ENCODE measurements at regions of chr1 and their contacts with region 1.

Region 1: DNA sequence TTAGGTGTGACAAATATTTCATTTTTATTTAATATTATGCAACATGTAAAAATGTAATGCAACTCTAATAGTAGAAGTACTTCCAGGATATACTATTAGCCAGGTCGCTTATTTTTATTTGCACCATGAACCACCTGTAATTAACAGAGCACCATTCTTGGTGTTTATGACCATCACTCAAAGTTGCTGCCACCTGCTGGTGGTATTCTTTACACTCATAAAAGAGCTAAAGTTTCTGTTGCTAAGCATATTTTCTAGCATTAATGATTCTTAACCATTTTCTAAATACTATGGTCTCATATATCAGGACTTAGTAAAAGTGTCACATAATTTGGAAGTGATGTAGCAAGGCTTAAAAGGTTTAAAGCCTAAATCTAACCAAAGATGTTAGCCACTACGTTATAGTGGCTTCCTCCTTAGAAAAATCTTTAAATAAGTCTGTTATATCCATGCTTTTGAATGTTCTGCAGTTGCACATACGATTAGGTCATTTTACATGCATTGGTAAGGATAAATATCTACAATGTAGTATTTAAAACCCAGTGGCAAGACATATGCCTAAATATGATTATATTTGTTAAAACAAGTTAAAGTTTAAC is 244.5 kb downstream of the NEGR1 start:
- H3K4me3 Mint-ChIP-seq: no peak overlapping the region
- H3K27ac Mint-ChIP-seq: no peak overlapping the region
- H3K4me1 Mint-ChIP-seq: no peaks in the 10 kb centered on the region
- H3K27me3 Mint-ChIP-seq: no peaks in the 10 kb centered on the region

Region 2: DNA sequence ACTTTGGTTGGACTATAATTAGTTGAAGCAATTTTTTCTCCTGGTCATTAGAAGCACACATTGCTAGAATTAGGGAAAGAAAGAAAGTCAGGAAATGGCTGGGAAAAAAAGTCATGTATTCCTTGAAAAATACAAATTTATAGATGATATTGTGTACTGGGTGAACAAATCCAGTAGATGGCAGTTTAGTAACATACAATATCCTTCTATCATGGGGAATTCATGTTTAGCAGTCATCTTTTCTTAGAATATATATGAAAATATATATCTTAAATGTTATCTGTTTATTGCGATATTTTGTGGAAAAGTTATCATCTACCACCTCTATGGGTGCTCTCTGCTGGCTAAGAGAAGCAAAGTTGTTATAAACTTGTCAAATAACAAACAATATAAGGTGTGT is 943.9 kb before region 1 on chr1:
- intact Hi-C with region 1: loop called (anchors 5 kb)
- H3K4me3 Mint-ChIP-seq: no peak overlapping the region
- H3K27ac Mint-ChIP-seq: no peak overlapping the region
- H3K4me1 Mint-ChIP-seq: no peaks in the 10 kb centered on the region
- H3K27me3 Mint-ChIP-seq: no peaks in the 10 kb centered on the region

Region 3: DNA sequence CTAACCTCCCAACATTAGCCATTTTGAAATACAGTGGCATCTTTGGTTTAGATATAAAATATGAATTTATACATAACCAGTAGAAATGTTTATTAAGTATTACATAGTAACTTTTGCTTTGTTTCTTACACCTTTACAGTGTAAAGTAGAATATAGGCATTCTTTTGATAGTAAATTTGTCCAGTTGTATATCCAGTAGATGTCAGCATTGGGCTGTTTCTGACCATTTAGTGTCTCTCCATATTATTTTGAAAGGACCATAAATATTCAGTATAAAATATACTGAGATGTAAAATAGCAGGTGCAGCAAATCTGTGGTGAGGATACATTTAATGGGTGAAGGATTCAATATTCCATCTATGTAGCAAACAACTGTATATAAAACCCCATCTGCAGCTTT is 841.2 kb before region 1 on chr1:
- intact Hi-C with region 1: loop called (anchors 2 kb)
- H3K4me3 Mint-ChIP-seq: no peak overlapping the region
- H3K27ac Mint-ChIP-seq: no peak overlapping the region
- H3K4me1 Mint-ChIP-seq: no peaks in the 10 kb centered on the region
- H3K27me3 Mint-ChIP-seq: no peaks in the 10 kb centered on the region

Region 4: GRCh38 chr1:71587961-71588360 is 449.9 kb before region 1 on chr1:
- intact Hi-C with region 1: loop called (anchors 1 kb)
- H3K4me3 Mint-ChIP-seq: no peak overlapping the region
- H3K27ac Mint-ChIP-seq: no peak overlapping the region
- H3K4me1 Mint-ChIP-seq: peaks cover 9% of the 10 kb centered on the region
- H3K27me3 Mint-ChIP-seq: no peaks in the 10 kb centered on the region

Region 5: GRCh38 chr1:71967670-71968069 is 70.2 kb before region 1 on chr1:
- intact Hi-C with region 1: no loop called
- H3K4me3 Mint-ChIP-seq: no peak overlapping the region
- H3K27ac Mint-ChIP-seq: no peak overlapping the region
- H3K4me1 Mint-ChIP-seq: no peaks in the 10 kb centered on the region
- H3K27me3 Mint-ChIP-seq: no peaks in the 10 kb centered on the region

Region 6: GRCh38 chr1:72704841-72705477 is 667.1 kb after region 1 on chr1:
- intact Hi-C with region 1: no loop called
- H3K4me3 Mint-ChIP-seq: no peak overlapping the region
- H3K27ac Mint-ChIP-seq: no peak overlapping the region
- H3K4me1 Mint-ChIP-seq: no peaks in the 10 kb centered on the region
- H3K27me3 Mint-ChIP-seq: no peaks in the 10 kb centered on the region

Measured in dendritic cell treated with granulocyte-macrophage colony-stimulating factor and Interleukin-4, amounts not matched to agents 40 ng/mL and 50 ng/mL, for 4 days (primary cell).